Activated naive CD4-positive, alpha-beta T cell treated with anti-CD3 and anti-CD28 coated beads for 36 hours (primary cell): ENCODE measurements at regions of chr19 and their contacts with region 1.

Region 1: GRCh38 chr19:10730923-10731322 is 13.0 kb downstream of the DNM2 start:
- DNase-seq: no peak
- H3K4me3 Mint-ChIP-seq: peak overlapping the region; percentile 52
- H3K27ac Mint-ChIP-seq: peak overlapping the region; percentile 84
- H3K4me1 Mint-ChIP-seq: peaks cover 51% of the 10 kb centered on the region
- H3K27me3 Mint-ChIP-seq: no peaks in the 10 kb centered on the region

Region 2: DNA sequence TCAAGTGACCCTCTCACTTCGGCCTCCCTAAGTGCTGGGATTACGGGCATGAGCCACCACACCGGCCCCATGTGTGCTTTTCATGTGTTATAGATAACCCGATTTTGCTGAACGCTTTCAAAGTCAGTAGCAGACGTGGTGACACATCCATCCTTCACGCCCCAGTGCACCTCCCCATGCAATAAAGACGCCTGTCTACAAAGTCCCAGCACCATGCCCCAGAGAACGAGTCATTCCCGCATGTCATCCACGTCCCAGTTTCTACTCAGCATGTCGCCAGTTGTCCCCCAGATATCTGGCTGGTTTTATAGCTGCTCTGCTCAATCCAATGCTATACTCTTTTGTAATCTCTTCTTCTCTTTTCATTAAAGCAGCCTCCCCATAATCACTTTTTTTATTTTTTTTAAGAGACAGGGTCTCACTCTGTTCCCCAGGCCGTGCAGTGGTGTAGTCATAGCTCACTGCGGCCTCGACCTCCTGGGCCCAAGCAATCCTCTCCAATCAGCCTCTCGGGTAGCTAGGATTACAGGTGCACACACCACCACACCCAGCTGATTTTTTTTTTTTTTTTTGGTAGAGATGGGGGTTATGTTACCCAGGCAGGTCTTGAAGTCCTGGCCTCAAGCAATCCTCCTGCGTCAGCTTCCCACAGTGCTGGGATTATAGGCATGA is 29.5 kb after region 1 on chr19:
- CTCF ChIA-PET with region 1: interaction called, 10 read pairs
- intact Hi-C with region 1: loop called (anchors 1 kb)
- DNase-seq: peak; percentile 65
- H3K4me3 Mint-ChIP-seq: peak overlapping the region; percentile 71
- H3K27ac Mint-ChIP-seq: peak overlapping the region; percentile 96
- H3K4me1 Mint-ChIP-seq: peaks cover 88% of the 10 kb centered on the region
- H3K27me3 Mint-ChIP-seq: no peaks in the 10 kb centered on the region

Region 3: GRCh38 chr19:10812902-10813404 is 82.0 kb after region 1 on chr19:
- CTCF ChIA-PET with region 1: no interaction called
- intact Hi-C with region 1: no loop called
- DNase-seq: peak; percentile 55
- H3K4me3 Mint-ChIP-seq: no peak overlapping the region
- H3K27ac Mint-ChIP-seq: peak overlapping the region; percentile 86
- H3K4me1 Mint-ChIP-seq: peaks cover 20% of the 10 kb centered on the region
- H3K27me3 Mint-ChIP-seq: no peaks in the 10 kb centered on the region

Region 4: DNA sequence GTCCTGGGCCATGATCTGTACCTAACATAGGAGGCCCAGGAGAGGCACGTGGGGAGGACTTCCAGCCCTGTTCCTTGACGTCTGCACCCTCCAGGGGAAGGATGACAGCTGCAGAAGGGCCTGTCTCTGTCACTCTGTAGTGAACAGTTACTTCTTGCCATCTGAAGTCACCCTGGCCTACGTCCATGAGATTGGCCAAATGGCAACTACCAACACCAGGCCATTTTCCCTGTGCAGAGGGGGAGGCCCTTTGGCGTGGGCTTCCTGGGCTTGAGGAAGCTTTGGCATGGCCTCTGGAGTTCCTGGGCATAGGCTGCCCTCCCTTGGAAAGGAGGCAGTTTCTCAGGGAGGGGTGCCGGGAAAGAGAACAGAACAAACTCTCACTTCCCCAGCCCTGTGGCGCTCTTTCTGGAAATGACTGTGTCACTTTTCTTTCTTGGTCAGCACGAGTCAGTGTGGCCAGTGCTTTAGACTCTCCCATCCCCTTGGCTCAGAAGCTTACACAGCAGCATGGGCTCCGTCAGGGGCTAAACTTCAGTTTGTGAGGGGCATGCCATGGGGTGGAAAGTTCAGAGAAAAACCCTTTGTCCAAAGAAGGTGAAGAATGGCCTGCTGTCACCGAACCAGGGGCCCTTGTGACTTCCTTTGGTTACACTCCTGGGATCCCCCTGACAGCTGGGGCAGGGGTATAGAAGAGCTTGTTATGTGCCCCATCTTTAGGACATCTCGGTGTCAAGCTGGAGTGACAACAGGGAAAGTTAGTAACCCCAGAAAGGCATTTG is 145.7 kb after region 1 on chr19:
- CTCF ChIA-PET with region 1: no interaction called
- intact Hi-C with region 1: no loop called
- DNase-seq: no peak
- H3K4me3 Mint-ChIP-seq: no peak overlapping the region
- H3K27ac Mint-ChIP-seq: no peak overlapping the region
- H3K4me1 Mint-ChIP-seq: peaks cover 51% of the 10 kb centered on the region
- H3K27me3 Mint-ChIP-seq: no peaks in the 10 kb centered on the region